ENCODE measurements at regions of chr12 and their contacts with region 1.

Region 1: GRCh38 chr12:106357549-106358395 is at the start of gene POLR3B:
- DNase-seq: peak; percentile 83 to 98
- H3K4me3 ChIP-seq: peak within 1 kb of the TSS; percentile 70 to 83
- H3K27ac ChIP-seq: peak within 1 kb of the TSS; percentile 84 to 90
- H3K4me1 ChIP-seq: peaks cover 11 to 12% of the 10 kb centered on the region in 2 donors
- H3K27me3 ChIP-seq: no peaks in the 10 kb centered on the region
- CTCF ChIP-seq: peak; percentile 72 to 86 (median 83)
- total RNA-seq, gene POLR3B: 0.21 TPM

Region 2: GRCh38 chr12:106247674-106248311 is 110.0 kb before region 1 on chr12 and contains the start of gene CKAP4:
- intact Hi-C with region 1: loop called (anchors 5 kb)
- DNase-seq: peak in 1 of 2 donors; percentile 87
- H3K4me3 ChIP-seq: peak within 1 kb of the TSS; percentile 90 to 95
- H3K27ac ChIP-seq: peak within 1 kb of the TSS; percentile 97 to 99
- H3K4me1 ChIP-seq: peaks cover 3 to 24% of the 10 kb centered on the region in 2 donors
- H3K27me3 ChIP-seq: no peaks in the 10 kb centered on the region
- CTCF ChIP-seq: peak in 1 of 3 experiments; percentile 20
- total RNA-seq, gene CKAP4: 116 TPM

Region 3: DNA sequence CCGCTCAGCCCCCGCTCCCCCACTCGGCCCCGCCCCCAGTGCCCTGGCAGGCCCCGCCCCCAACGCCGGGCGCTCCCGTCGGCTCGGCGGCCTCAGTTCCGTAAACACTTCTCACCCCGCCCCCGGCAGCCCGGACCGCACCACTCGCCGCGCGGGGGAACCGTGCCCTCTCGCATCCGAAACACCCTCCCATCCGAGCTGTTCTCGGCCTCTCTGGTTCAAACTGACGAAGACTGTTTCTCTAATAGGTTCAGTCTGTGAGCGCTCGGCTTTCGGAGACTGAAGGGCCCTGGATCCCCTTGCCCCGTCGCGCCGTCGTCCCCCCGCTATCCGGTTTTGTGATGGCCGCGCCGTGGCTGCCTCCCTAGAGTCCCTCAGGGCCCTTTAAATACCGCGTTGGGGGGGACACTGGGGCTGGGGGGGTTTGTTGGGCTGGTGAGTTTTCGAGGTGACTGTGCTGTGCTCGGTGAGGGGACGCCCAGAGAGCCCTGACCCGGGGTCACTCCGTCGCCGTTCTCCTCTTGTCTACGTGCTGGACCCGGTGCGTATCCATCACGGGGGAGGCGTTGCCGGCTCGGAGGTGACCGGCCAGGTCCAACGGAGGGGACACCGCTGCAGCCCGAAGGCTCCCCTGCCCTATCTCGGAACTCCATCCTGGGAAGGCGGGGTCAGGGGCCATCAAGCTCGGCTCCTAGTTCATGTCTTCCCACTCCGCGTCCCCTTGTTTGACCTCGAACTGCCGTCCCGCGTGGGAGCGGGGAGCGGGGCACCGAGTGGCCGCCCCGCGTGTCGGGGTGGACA is 55.2 kb before region 1 on chr12 and contains the start of gene TCP11L2:
- intact Hi-C with region 1: loop called (anchors 1 kb)
- DNase-seq: peak; percentile 46 to 92
- H3K4me3 ChIP-seq: peak within 1 kb of the TSS; percentile 86 to 90
- H3K27ac ChIP-seq: peak within 1 kb of the TSS; percentile 88 to 91
- H3K4me1 ChIP-seq: peaks cover 0 to 12% of the 10 kb centered on the region in 2 donors
- H3K27me3 ChIP-seq: no peaks in the 10 kb centered on the region
- CTCF ChIP-seq: no peak
- total RNA-seq, gene TCP11L2: 16.0 TPM

Region 4: GRCh38 chr12:106461730-106462129 is 104.0 kb after region 1 on chr12:
- intact Hi-C with region 1: no loop called
- DNase-seq: no peak
- H3K4me3 ChIP-seq: no peak overlapping the region
- H3K27ac ChIP-seq: no peak overlapping the region
- H3K4me1 ChIP-seq: no peaks in the 10 kb centered on the region
- H3K27me3 ChIP-seq: no peaks in the 10 kb centered on the region
- CTCF ChIP-seq: no peak

Region 5: DNA sequence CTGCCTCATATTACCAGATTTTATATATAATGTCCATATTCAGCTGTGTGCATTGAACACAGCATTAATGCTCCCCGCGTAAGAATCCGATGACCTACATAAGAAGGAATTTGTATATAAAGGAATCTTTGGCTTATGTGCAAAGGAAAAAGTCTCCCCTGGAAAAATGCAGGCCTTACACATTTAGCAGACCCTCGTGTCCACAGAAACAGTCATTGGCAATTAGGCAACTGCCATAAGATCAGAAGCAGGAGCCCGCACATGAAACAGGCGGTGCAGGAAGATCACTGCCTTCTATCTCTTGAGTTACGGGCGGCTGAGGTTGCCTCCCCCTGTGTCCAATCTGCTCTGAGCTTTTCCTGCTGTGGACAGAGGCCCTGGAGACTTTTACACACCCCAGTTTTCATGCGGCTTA is 161.8 kb after region 1 on chr12:
- intact Hi-C with region 1: no loop called
- DNase-seq: no peak
- H3K4me3 ChIP-seq: no peak overlapping the region
- H3K27ac ChIP-seq: no peak overlapping the region
- H3K4me1 ChIP-seq: no peaks in the 10 kb centered on the region
- H3K27me3 ChIP-seq: no peaks in the 10 kb centered on the region
- CTCF ChIP-seq: no peak

Region 6: DNA sequence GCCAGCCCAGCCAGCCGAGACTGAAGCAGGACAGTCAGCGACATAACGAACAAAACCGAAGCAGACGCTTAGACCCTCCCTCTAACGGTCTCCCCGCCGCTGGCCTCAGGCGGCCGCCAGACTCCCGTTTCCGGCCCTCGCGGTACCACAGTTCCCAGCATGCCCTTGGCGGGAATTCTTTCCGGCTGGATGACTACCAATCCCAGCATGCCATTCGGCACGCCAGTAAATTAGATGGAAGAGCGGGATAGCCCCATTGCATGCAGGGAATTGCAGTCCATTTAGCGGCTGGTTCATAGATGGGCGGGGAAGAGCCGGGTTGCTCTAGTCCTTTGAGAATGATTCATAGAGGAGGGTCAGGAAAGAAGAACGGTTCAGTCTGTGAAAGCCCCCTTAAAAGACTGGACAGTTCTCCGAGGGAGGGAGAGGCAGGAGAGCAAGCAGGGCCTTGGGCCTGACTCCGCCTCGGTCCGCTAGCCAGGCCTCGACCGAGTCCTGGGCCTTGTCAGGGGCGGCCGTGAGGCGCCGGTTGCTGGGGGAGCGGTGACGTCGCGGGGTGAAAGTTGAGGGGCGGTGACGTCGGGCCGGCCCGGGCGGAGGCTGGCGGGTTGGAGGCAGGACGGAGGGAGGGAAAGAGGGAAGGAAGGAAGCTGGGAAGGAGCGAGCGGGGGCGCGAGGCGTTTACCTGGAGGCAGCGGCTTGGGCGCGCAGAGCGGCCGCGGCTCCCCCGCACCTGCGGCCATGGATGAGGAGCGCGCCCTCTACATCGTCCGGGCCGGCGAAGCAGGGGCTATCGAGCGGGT is 416.4 kb after region 1 on chr12 and contains the start of gene RIC8B:
- intact Hi-C with region 1: loop called (anchors 5 kb)
- DNase-seq: peak; percentile 83 to 98
- H3K4me3 ChIP-seq: peak within 1 kb of the TSS; percentile 68 to 72
- H3K27ac ChIP-seq: peak within 1 kb of the TSS; percentile 95 to 98
- H3K4me1 ChIP-seq: peaks cover 0 to 26% of the 10 kb centered on the region in 2 donors
- H3K27me3 ChIP-seq: no peaks in the 10 kb centered on the region
- CTCF ChIP-seq: no peak
- total RNA-seq, gene RIC8B: 19.1 TPM

Region 7: DNA sequence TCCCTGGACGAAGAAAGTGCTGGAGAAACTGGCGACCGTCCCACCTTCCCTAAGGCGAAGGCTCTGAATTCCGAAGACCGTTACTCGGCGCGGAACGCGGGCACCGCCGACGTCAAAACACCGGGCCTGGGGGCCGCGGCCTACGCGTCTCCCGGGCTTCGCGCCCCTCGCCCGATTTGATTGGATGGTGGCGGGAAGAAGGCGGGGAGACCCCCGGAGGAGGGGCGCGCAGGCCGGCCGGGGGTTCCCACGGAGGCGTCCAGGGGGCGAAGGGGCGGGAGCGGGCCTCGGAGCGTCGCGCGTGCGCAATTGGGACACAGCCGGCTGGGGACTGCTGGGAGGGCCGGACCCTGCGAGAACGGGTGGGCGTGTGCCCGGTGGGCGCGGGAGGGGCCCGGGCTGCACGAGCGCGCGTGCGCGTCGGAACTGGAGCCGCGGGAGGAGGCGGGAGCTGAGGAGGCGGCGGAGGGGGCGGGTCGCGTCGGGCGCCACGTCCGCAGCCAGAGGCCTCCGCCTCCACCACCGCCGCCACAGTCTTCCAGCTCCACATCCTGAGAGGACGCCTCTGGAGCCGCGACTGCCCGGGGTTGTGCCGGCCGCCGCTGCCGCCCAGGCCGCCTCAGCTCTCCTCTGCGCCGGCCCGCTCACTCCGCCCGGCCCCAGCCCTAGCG is 597.7 kb after region 1 on chr12 and contains the start of gene TMEM263:
- intact Hi-C with region 1: loop called (anchors 1 kb)
- DNase-seq: peak; percentile 72 to 96
- H3K4me3 ChIP-seq: peak within 1 kb of the TSS; percentile 85 to 99
- H3K27ac ChIP-seq: peak within 1 kb of the TSS; percentile 99
- H3K4me1 ChIP-seq: peaks cover 0 to 20% of the 10 kb centered on the region in 2 donors
- H3K27me3 ChIP-seq: no peaks in the 10 kb centered on the region
- CTCF ChIP-seq: peak in 1 of 3 experiments; percentile 40
- total RNA-seq, gene TMEM263: 27.0 TPM

Measured in ascending aorta (tissue), 2 donors.